Heart left ventricle (tissue), 16 donors: ENCODE measurements at regions of chr18 and their contacts with region 1.

Region 1: GRCh38 chr18:25896178-25896780 is 194.1 kb downstream of the SS18 start:
- DNase-seq: peak in 1 of 5 donors; percentile 13
- ATAC-seq: peak in 2 of 4 donors; percentile 30 to 67
- H3K4me3 ChIP-seq: no peak overlapping the region
- H3K27ac ChIP-seq: no peak overlapping the region
- H3K4me1 ChIP-seq: no peaks in the 10 kb centered on the region
- H3K27me3 ChIP-seq: no peaks in the 10 kb centered on the region
- CTCF ChIP-seq: peak; percentile 59 to 83 (median 70)
- POLR2A ChIP-seq: no peak

Region 2: GRCh38 chr18:25843791-25844190 is 52.5 kb before region 1 on chr18:
- intact Hi-C with region 1: loop called in 1 of 10 experiments (anchors 10 kb)
- DNase-seq: no peak
- ATAC-seq: no peak
- H3K4me3 ChIP-seq: no peak overlapping the region
- H3K27ac ChIP-seq: no peak overlapping the region
- H3K4me1 ChIP-seq: no peaks in the 10 kb centered on the region
- H3K27me3 ChIP-seq: no peaks in the 10 kb centered on the region
- CTCF ChIP-seq: no peak
- POLR2A ChIP-seq: no peak

Region 3: DNA sequence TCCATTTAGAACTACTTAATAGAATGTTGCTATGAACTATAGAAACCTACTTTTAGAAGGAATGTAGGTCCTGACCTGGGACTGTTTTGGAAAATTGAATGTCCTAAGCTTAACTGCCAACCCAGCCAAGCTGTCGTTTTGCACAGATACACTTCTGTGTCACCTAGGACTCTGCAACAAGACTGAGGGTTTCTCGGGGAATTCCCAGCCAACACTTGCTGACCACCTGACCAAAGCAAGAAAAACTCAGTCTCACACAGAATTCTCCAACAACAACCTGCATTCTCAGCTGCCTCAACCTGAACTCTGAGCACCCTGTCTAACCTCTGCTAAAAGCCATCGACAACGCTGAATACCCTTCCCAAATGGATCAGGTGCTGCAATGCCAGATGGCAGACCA is 65.9 kb after region 1 on chr18:
- intact Hi-C with region 1: loop called in 2 of 10 experiments (anchors 10 kb)
- DNase-seq: no peak
- ATAC-seq: no peak
- H3K4me3 ChIP-seq: no peak overlapping the region
- H3K27ac ChIP-seq: no peak overlapping the region
- H3K4me1 ChIP-seq: no peaks in the 10 kb centered on the region
- H3K27me3 ChIP-seq: peaks cover 0 to 6% (median 0%) of the 10 kb centered on the region in 9 donors
- CTCF ChIP-seq: no peak
- POLR2A ChIP-seq: no peak